Mammary epithelial cell (primary cell): ENCODE measurements at regions of chr21 and their contacts with region 1.

Region 1: GRCh38 chr21:37862536-37862935 is 53.7 kb downstream of the KCNJ6 start:
- DNase-seq: peak; percentile 38
- H3K4me3 ChIP-seq: no peak overlapping the region
- H3K27ac ChIP-seq: no peak overlapping the region
- H3K4me1 ChIP-seq: no peaks in the 10 kb centered on the region
- H3K27me3 ChIP-seq: no peaks in the 10 kb centered on the region
- CTCF ChIP-seq: no peak

Region 2: GRCh38 chr21:37787456-37787855 is 75.1 kb before region 1 on chr21:
- CTCF ChIA-PET with region 1: no interaction called
- dilution Hi-C with region 1: no loop called
- in situ Hi-C with region 1: no loop called
- intact Hi-C with region 1: no loop called
- DNase-seq: peak; percentile 61
- H3K4me3 ChIP-seq: no peak overlapping the region
- H3K27ac ChIP-seq: no peak overlapping the region
- H3K4me1 ChIP-seq: peaks cover 4% of the 10 kb centered on the region
- H3K27me3 ChIP-seq: no peaks in the 10 kb centered on the region
- CTCF ChIP-seq: no peak

Region 3: DNA sequence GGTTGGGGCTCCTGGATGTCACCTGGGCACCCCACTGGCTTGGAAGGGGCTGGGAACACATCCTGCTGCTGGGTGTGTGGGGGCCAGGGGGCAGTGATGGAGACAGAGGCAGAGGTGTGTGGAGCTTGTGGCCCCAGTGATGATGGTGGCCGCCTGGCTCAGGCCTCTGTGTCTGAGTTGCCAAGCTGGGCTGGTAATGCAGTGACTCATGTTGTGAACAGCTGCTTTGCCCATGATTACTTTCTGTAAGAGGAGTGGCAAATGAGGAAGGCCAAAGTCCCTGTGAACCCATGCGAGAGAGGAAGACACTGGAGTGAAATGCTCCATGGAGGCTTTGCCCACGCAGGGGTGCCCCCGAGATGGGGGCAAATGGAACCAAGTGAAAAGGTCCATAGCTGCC is 33.1 kb before region 1 on chr21:
- CTCF ChIA-PET with region 1: no interaction called
- dilution Hi-C with region 1: no loop called
- in situ Hi-C with region 1: no loop called
- intact Hi-C with region 1: loop called (anchors 1 kb)
- DNase-seq: peak; percentile 55
- H3K4me3 ChIP-seq: no peak overlapping the region
- H3K27ac ChIP-seq: no peak overlapping the region
- H3K4me1 ChIP-seq: no peaks in the 10 kb centered on the region
- H3K27me3 ChIP-seq: no peaks in the 10 kb centered on the region
- CTCF ChIP-seq: no peak

Region 4: DNA sequence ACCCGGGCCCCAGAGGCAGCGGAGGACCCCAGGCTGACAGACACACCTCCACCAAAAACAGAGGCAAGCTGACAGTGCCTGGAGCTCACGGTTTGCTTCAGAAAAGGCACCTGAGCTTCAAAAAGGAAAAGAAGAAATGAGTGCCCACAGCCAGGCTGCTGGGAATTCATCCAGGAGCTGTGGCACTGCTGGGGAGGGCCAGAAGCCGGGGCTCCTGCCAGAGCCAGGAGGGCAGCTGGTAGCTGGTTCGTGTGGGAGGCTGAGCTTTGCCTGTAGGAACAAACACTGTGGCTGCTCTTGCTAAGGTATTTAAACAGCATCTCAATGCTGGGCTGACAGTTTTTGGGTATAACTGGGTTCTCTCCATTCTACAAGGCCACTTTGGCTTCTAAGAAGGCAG is 34.3 kb after region 1 on chr21:
- CTCF ChIA-PET with region 1: no interaction called
- dilution Hi-C with region 1: loop called (anchors 5 kb)
- in situ Hi-C with region 1: no loop called
- intact Hi-C with region 1: no loop called
- DNase-seq: no peak
- H3K4me3 ChIP-seq: no peak overlapping the region
- H3K27ac ChIP-seq: no peak overlapping the region
- H3K4me1 ChIP-seq: no peaks in the 10 kb centered on the region
- H3K27me3 ChIP-seq: no peaks in the 10 kb centered on the region
- CTCF ChIP-seq: no peak